Activated naive CD4-positive, alpha-beta T cell treated with anti-CD3 and anti-CD28 coated beads for 36 hours (primary cell): ENCODE measurements at regions of chr14 and their contacts with region 1.

Region 1: DNA sequence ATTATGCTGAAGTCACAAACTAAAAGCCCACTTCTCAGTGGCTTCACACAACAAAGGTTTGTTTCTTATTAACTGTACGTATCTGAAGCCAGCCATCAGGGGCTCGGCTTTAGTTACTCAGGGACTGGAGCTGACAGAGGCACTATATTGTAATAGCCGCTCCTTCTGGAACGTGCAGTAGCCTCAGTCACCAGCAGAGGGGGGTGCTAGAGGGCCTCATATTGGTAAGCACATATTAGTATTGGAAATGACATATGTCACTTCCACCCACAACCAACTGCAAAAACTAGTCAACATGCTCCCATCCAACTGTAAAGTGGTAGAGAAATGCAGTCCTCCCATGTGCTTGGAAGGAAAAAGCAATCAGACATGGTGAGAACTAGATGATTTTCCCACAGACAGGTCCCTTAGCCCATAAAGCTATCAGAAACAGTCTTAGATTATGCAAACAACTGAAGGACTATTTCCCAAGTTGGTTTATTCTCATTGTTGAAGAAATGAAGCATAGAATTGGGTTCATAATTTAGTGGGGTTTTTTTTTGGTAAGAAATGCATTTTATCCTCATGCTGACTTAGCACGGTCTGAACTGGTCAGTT is 183.6 kb upstream of the G2E3 start:
- DNase-seq: peak; percentile 84
- H3K4me3 Mint-ChIP-seq: no peak overlapping the region
- H3K27ac Mint-ChIP-seq: no peak overlapping the region
- H3K4me1 Mint-ChIP-seq: no peaks in the 10 kb centered on the region
- H3K27me3 Mint-ChIP-seq: peaks cover 10% of the 10 kb centered on the region

Region 2: GRCh38 chr14:30143627-30144026 is 231.8 kb before region 1 on chr14:
- CTCF ChIA-PET with region 1: no interaction called
- intact Hi-C with region 1: no loop called
- DNase-seq: no peak
- H3K4me3 Mint-ChIP-seq: no peak overlapping the region
- H3K27ac Mint-ChIP-seq: no peak overlapping the region
- H3K4me1 Mint-ChIP-seq: no peaks in the 10 kb centered on the region
- H3K27me3 Mint-ChIP-seq: no peaks in the 10 kb centered on the region

Region 3: GRCh38 chr14:30402846-30403245 is 27.5 kb after region 1 on chr14:
- CTCF ChIA-PET with region 1: interaction called, 12 read pairs
- intact Hi-C with region 1: no loop called
- DNase-seq: no peak
- H3K4me3 Mint-ChIP-seq: no peak overlapping the region
- H3K27ac Mint-ChIP-seq: no peak overlapping the region
- H3K4me1 Mint-ChIP-seq: no peaks in the 10 kb centered on the region
- H3K27me3 Mint-ChIP-seq: peaks cover 7% of the 10 kb centered on the region

Region 4: DNA sequence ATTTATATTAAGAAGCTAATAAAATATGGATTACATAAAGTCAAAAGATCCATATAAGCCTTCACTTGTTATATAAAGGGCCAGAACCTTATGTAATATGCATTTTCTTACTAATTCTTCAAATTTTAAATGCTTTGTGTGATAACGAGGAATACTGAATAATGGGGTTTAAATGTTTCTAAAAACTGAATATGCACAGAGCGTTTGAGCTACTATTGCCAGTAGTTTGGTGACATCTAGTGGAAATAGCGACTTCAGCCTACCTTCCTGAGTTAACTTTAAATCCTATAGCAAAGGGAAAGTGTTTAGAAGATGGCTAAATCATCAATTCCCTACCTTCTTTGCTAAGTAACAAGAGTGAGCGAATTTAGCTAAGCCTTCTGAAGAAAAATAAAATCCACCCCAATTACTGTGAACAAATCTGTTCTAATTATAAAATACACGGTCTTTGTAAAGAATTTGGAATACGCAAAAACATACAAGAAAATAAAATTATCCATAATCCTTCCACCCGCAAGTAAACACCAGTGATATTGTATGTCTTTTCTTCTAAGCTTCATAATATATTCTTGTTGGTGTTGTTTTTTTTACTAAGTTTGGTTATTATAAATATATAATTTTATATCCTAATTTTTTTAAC is 68.1 kb after region 1 on chr14:
- CTCF ChIA-PET with region 1: interaction called, 12 read pairs
- intact Hi-C with region 1: loop called (anchors 5 kb)
- DNase-seq: no peak
- H3K4me3 Mint-ChIP-seq: no peak overlapping the region
- H3K27ac Mint-ChIP-seq: no peak overlapping the region
- H3K4me1 Mint-ChIP-seq: no peaks in the 10 kb centered on the region
- H3K27me3 Mint-ChIP-seq: peaks cover 2% of the 10 kb centered on the region

Region 5: DNA sequence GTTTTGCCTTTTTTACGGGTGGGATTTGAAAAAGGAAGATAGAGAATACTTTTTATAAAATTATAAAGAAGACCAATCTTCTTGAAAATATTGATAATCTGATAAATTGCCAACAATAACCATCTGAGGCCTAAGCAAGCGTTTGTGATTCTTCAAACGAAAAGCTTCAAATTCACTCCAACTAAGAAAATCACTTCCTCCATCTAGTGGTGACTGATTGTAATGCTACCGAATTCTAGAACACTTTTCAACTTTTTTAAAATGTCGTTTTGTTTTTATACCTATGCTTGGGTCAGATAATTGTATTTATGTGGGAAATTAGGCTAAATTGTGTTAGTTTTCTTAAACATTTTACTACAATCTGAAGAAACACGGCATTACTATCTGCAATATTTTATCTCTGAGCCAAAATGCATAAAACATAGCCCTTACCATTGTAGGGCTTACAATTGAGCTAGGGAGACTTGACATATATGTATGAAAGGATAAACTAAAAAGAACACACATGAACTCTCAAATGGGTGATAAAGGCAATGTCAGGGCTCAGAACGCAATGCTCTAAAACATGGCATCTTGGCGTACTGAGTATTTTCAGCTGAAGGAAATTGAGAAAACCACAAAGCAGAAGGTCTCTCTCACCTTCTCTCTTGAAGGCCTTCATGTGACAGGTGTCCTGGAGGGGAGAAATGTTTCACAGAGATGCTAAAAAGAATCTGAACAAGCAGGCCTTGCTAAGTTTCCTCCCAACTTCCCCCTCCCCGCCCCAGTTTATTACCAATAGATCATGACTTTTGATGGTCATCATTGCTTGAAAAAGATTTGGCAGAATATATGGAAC is 146.7 kb after region 1 on chr14:
- CTCF ChIA-PET with region 1: interaction called, 60 read pairs
- intact Hi-C with region 1: loop called (anchors 1 kb)
- DNase-seq: no peak
- H3K4me3 Mint-ChIP-seq: no peak overlapping the region
- H3K27ac Mint-ChIP-seq: no peak overlapping the region
- H3K4me1 Mint-ChIP-seq: peaks cover 4% of the 10 kb centered on the region
- H3K27me3 Mint-ChIP-seq: no peaks in the 10 kb centered on the region

Region 6: DNA sequence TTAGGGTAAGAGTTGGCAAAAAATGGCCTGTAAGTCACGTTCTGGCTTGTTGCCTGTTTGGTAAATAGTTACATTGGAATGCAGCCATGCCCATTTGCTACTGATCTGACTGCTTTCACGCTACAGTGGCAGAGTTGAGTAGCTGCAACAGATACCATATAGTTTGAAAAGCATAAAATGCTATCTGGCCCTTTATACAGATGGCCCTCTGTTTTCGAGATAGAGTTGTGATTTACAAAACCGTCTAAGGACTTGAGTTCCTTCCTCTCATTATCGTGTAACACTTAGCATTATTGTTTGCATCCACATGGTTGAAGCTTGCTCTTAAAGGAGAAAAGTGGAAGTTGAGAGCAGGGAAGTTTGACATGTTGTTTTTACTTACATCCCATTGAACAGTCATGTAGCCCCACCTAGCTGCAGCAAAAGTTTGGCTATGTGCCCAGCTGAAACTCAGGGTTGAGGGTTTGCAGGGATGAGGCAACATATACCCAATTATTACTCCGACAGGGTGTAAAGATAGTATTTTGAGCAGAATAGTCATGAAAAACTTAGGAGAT is 235.5 kb after region 1 on chr14:
- CTCF ChIA-PET with region 1: no interaction called
- intact Hi-C with region 1: loop called (anchors 1 kb)
- DNase-seq: peak; percentile 58
- H3K4me3 Mint-ChIP-seq: no peak overlapping the region
- H3K27ac Mint-ChIP-seq: no peak overlapping the region
- H3K4me1 Mint-ChIP-seq: no peaks in the 10 kb centered on the region
- H3K27me3 Mint-ChIP-seq: no peaks in the 10 kb centered on the region

Region 7: DNA sequence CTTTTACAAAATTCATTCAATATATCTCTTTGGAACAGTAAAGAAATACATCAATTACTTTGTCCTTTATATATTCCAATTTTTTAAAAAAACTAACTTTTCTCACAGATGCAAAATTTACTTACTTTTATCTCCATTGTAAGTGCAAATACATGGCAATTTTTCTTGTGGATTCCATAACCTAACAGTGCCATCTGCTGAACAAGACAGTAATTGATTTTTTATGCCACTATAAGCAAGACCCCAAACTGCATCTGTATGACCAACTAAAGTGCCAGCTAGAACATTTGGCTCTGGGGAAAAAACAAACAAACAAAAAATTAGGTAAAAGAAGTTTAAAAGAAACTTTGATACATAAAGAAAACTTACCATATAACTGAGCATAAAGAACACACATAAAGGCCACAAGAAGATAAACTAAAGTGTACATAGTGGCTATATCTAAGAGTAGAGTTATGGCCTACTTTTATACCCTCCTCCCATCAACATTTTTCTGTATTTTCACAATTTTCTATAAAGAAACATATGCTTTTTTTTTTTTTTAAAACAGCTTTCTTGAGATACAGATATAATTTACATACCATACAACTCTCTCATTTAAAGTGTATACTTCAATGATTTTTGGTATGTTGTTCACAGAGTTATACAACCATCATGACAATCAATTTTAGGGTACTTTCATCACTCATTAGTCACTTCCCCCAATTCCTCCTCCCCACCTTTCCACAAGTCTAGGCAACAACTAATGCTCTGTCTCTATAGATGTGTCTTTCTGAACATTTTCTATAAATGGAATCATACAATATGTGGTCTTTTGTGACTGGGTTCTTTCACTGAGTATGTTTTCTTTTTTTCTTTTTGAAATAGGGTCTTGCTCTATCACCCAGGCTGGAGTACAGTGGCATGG is 531.6 kb after region 1 on chr14:
- CTCF ChIA-PET with region 1: no interaction called
- intact Hi-C with region 1: loop called (anchors 5 kb)
- DNase-seq: no peak
- H3K4me3 Mint-ChIP-seq: no peak overlapping the region
- H3K27ac Mint-ChIP-seq: no peak overlapping the region
- H3K4me1 Mint-ChIP-seq: peaks cover 2% of the 10 kb centered on the region
- H3K27me3 Mint-ChIP-seq: no peaks in the 10 kb centered on the region